ENCODE measurements at regions of chr16 and their contacts with region 1.

Region 1: GRCh38 chr16:72847187-72848027 is 200.5 kb downstream of the ZFHX3 start:
- DNase-seq: no peak
- ATAC-seq: no peak
- H3K4me3 ChIP-seq: no peak overlapping the region
- H3K27ac ChIP-seq: peak overlapping the region in 2 of 3 donors; percentile 9 to 51
- H3K4me1 ChIP-seq: peaks cover 0 to 21% (median 6%) of the 10 kb centered on the region in 4 donors
- H3K27me3 ChIP-seq: no peaks in the 10 kb centered on the region
- CTCF ChIP-seq: peak in 3 of 4 donors; percentile 22 to 32 (median 25)
- POLR2A ChIP-seq: no peak

Region 2: GRCh38 chr16:72590151-72590937 is 257.1 kb before region 1 on chr16:
- intact Hi-C with region 1: no loop called
- DNase-seq: no peak
- ATAC-seq: no peak
- H3K4me3 ChIP-seq: no peak overlapping the region
- H3K27ac ChIP-seq: no peak overlapping the region
- H3K4me1 ChIP-seq: no peaks in the 10 kb centered on the region
- H3K27me3 ChIP-seq: no peaks in the 10 kb centered on the region
- CTCF ChIP-seq: no peak
- POLR2A ChIP-seq: no peak

Region 3: GRCh38 chr16:73023752-73024570 is 176.6 kb after region 1 on chr16:
- intact Hi-C with region 1: no loop called
- DNase-seq: no peak
- ATAC-seq: no peak
- H3K4me3 ChIP-seq: no peak overlapping the region
- H3K27ac ChIP-seq: no peak overlapping the region
- H3K4me1 ChIP-seq: peaks cover 0 to 36% (median 8%) of the 10 kb centered on the region in 4 donors
- H3K27me3 ChIP-seq: no peaks in the 10 kb centered on the region
- CTCF ChIP-seq: no peak
- POLR2A ChIP-seq: no peak

Region 4: DNA sequence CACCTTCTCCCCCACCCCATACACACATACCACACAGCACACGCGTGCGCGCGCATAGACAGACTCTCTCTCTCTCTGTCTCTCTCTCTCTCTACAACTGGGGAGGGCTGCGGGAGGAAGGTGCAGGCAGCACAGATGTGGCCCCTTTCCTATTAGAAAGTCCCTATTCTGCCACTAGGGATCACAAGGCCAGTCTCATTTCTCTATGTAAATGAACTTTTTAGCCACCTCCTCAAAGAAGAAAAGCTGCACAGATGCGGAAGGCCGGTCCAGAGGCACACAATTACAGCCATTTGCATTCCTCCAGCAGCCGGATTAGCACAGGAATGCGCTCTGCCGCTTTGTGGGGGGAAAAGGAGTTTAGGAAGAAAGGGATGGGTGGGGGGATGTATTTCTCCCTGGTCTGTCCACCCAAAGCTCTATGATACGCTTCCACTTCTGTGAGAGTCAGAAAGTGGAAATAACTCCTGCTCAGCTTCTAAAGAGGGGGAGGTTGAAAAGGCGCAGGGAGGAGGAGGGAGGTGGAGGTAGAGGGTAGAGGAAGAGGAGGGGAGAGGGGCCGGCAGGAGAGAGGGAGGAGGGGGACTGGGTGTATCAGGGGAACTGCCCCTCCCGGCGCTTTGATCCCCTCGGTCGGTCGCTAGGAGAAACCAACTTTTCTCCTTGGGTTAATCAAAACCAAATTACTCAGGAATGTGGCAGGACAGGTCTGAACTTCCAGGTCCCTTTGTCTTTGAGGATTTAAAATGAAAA is 188.8 kb after region 1 on chr16:
- intact Hi-C with region 1: loop called in 1 of 2 experiments (anchors 10 kb)
- DNase-seq: no peak
- ATAC-seq: no peak
- H3K4me3 ChIP-seq: no peak overlapping the region
- H3K27ac ChIP-seq: no peak overlapping the region
- H3K4me1 ChIP-seq: peaks cover 0 to 6% (median 3%) of the 10 kb centered on the region in 4 donors
- H3K27me3 ChIP-seq: no peaks in the 10 kb centered on the region
- CTCF ChIP-seq: no peak
- POLR2A ChIP-seq: no peak

Measured in right lobe of liver (tissue), 6 donors.